ENCODE measurements at regions of chr5 and their contacts with region 1.

Region 1: DNA sequence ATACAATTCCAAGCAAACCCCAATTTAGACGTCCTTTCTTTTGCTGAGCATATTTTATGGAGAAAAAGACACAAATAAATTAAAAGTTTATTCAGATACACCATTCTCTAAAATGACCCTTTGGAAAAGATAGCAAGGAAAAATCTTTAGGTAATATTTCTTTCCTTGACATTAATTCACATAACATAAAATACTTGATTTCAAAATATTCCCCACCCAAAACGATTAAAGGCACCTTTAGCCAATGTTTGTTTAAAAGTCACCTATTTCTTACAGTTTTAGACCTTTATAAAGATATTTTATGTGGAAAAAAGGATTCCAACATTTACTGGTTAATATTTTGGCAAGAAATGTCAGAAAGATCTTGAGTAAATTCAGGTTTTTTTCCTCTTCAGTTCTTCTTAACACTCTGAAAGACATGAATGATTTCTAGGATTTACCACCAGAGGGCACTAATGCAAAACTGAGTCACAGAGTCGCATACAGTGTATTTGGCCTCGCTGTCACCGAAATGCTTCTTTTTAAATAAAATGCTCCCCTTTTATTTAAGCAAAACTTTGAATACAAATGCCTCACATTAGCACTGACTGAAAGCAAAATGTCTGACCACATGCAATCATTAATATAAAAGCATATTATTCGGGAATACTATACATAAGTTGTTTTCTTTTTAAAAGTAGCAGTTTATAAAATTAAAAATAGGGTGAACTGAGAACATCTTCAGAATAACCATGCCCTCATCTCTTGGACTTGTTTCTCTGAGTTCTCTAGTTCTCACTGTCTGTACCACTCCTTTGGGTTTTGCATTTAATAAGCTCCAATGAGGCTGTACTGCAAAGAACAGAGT is 122.5 kb downstream of the SLC1A3 start:
- DNase-seq: no peak
- ATAC-seq: no peak
- H3K4me3 Mint-ChIP-seq: no peak overlapping the region
- H3K27ac Mint-ChIP-seq: no peak overlapping the region
- H3K4me1 Mint-ChIP-seq: peaks cover 24% of the 10 kb centered on the region
- H3K27me3 Mint-ChIP-seq: peaks cover 3% of the 10 kb centered on the region
- CTCF ChIP-seq: peak; percentile 66

Region 2: DNA sequence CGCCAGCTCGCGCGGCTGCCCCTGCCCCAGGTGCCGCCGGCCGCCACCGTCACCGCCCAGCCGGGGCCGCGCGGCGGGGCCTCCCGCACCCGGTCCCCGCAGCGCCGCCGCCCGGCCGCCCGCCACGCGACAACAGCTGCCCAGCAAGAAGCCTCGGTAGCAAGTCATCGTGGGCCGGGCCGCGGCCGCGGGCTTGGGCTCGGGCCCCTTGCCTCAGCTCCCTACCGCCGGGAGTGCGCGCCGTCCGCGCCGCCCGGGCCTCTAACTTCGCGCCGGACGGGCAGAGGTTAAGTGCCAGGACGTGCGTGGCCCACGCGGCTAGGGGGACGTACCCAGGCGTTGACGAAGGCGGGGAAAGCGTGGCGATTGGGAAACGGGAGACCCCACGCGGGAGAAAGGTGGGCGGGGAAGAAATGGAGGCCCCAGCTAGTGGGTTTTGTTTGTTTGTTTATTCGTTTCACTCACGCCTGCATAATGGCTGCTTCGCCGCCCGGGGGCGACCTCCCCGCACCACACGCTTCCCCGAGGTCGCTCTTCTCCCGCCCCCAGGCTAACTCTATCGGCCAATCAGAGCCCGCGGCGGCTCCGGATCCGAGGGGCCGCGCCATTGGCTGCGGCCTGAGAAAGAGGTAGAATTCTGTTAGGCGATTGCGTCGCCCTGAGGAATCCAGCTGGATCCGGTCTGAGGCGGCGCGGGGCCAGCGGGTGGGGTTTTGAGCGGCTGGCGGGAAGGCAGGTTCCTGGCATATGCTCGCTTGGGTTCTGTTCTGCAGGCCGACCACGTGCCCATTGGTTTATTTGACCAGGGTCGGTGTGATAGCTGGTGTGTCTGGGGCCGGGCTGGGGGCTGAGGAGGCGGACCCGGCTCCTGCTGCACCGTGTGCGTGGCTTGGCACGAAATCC is 487.0 kb before region 1 on chr5 and contains the start of gene NADK2:
- CTCF ChIA-PET with region 1: no interaction called
- POLR2A ChIA-PET with region 1: interaction called, 18 read pairs
- intact Hi-C with region 1: loop called (anchors 10 kb)
- DNase-seq: peak; percentile 87
- ATAC-seq: peak; percentile 87
- H3K4me3 Mint-ChIP-seq: peak within 1 kb of the TSS; percentile 91
- H3K27ac Mint-ChIP-seq: peak within 1 kb of the TSS; percentile 95
- H3K4me1 Mint-ChIP-seq: peaks cover 49% of the 10 kb centered on the region
- H3K27me3 Mint-ChIP-seq: no peaks in the 10 kb centered on the region
- CTCF ChIP-seq: no peak
- total RNA-seq, gene NADK2: 13.3 and 18.2 TPM in 2 replicates

Region 3: GRCh38 chr5:36701085-36701698 is 27.7 kb before region 1 on chr5:
- CTCF ChIA-PET with region 1: interaction called, 9 read pairs
- POLR2A ChIA-PET with region 1: interaction called, 29 read pairs
- intact Hi-C with region 1: no loop called
- DNase-seq: no peak
- ATAC-seq: peak; percentile 98
- H3K4me3 Mint-ChIP-seq: peak overlapping the region; percentile 62
- H3K27ac Mint-ChIP-seq: peak overlapping the region; percentile 82
- H3K4me1 Mint-ChIP-seq: peaks cover 29% of the 10 kb centered on the region
- H3K27me3 Mint-ChIP-seq: no peaks in the 10 kb centered on the region
- CTCF ChIP-seq: no peak

Region 4: GRCh38 chr5:36790838-36791237 is 61.9 kb after region 1 on chr5:
- CTCF ChIA-PET with region 1: no interaction called
- POLR2A ChIA-PET with region 1: no interaction called
- intact Hi-C with region 1: no loop called
- DNase-seq: no peak
- ATAC-seq: no peak
- H3K4me3 Mint-ChIP-seq: no peak overlapping the region
- H3K27ac Mint-ChIP-seq: no peak overlapping the region
- H3K4me1 Mint-ChIP-seq: peaks cover 9% of the 10 kb centered on the region
- H3K27me3 Mint-ChIP-seq: peaks cover 5% of the 10 kb centered on the region
- CTCF ChIP-seq: no peak

Region 5: DNA sequence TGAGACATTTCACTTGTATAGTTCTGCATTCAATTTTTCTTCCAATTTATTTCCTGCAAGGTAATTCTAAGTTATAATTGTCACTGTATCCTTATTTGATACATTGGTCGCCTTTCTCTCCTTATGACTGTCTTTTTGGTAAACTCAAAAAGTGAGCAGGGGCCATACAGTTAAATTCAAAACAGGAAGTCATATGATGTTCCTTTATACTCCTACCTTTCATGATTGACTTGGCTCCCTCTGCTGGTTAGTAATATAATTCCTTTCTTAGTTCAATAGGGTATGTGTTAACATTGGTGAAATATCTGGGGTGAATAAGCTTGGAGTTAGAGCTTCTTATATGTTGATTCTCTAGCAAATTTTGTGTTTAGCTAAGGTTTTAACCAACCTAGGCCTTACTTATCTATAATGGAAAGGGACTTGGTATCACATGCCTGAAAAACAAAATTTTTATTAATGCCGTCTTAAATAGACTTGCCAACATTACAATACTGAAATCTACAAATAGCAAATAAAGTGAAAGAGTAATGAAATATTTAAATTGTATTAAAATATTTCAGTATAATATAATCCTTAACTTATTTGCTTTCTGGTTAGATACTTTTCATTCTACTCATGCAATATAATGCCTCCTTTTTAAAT is 141.6 kb after region 1 on chr5:
- CTCF ChIA-PET with region 1: interaction called, 11 read pairs
- POLR2A ChIA-PET with region 1: interaction called, 45 read pairs
- intact Hi-C with region 1: loop called (anchors 1 kb)
- DNase-seq: no peak
- ATAC-seq: peak; percentile 85
- H3K4me3 Mint-ChIP-seq: no peak overlapping the region
- H3K27ac Mint-ChIP-seq: peak overlapping the region; percentile 62
- H3K4me1 Mint-ChIP-seq: peaks cover 29% of the 10 kb centered on the region
- H3K27me3 Mint-ChIP-seq: no peaks in the 10 kb centered on the region
- CTCF ChIP-seq: peak; percentile 56

Region 6: GRCh38 chr5:37005946-37006540 is 277.1 kb after region 1 on chr5:
- CTCF ChIA-PET with region 1: interaction called, 7 read pairs
- POLR2A ChIA-PET with region 1: no interaction called
- intact Hi-C with region 1: loop called (anchors 1 kb)
- DNase-seq: no peak
- ATAC-seq: no peak
- H3K4me3 Mint-ChIP-seq: no peak overlapping the region
- H3K27ac Mint-ChIP-seq: no peak overlapping the region
- H3K4me1 Mint-ChIP-seq: no peaks in the 10 kb centered on the region
- H3K27me3 Mint-ChIP-seq: no peaks in the 10 kb centered on the region
- CTCF ChIP-seq: no peak

Region 7: DNA sequence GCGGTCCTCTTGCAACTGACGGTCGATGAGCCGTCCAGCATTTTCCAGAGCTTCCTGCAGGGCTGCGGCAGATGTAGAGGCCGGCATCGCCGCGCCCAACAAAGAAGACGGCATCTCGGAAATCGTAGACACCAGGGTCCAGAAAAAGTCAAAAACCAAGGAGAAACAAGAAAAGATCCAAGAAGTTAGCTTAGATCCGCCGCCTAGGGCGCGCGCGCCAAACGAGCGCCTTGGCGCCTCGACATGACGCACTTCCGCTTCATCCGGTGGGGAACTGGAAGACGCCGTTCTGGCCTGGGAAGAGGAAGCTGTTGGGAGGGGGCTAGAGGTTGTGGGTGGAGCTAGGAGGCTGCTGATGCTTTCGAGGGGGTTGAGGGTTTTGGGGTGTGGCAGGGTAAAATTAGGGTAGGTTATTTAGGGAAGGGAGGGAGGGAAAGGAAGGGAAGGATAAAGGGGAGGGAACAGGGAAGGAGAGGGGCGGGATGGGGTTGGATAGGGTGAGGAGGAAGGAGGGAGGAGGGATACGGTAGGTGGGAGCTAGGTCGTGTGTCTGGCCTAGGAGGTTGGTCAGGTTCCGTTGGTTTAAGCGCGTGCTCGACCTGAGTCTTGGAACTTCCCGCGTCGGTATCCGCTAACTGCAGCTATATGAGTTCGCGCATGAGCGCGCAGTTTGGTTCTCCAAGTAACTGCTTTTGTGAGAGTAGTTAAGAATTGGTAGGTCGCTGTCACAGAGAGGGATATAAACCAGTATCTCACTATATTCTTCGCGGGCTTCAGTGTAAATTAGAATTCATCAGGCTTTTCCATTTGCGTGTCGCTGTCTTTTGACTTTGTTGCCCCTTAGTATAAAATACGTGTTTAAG is 642.2 kb after region 1 on chr5 and contains the start of gene NUP155:
- CTCF ChIA-PET with region 1: no interaction called
- POLR2A ChIA-PET with region 1: interaction called, 5 read pairs
- intact Hi-C with region 1: loop called (anchors 5 kb)
- DNase-seq: peak; percentile 79
- ATAC-seq: peak; percentile 94
- H3K4me3 Mint-ChIP-seq: peak within 1 kb of the TSS; percentile 99
- H3K27ac Mint-ChIP-seq: peak within 1 kb of the TSS; percentile 97
- H3K4me1 Mint-ChIP-seq: peaks cover 32% of the 10 kb centered on the region
- H3K27me3 Mint-ChIP-seq: no peaks in the 10 kb centered on the region
- CTCF ChIP-seq: no peak
- total RNA-seq, gene NUP155: 37.2 and 38.7 TPM in 2 replicates